ENCODE measurements at regions of chr1 and their contacts with region 1.

Region 1: GRCh38 chr1:21200767-21201166 is 24.1 kb upstream of the EIF4G3 start:
- DNase-seq: no peak
- H3K4me3 ChIP-seq: no peak overlapping the region
- H3K27ac ChIP-seq: no peak overlapping the region
- H3K4me1 ChIP-seq: no peaks in the 10 kb centered on the region
- H3K27me3 ChIP-seq: no peaks in the 10 kb centered on the region
- CTCF ChIP-seq: no peak
- EP300 ChIP-seq: no peak
- POLR2A ChIP-seq: no peak

Region 2: GRCh38 chr1:20376880-20377494 is 823.8 kb before region 1 on chr1:
- intact Hi-C with region 1: no loop called
- DNase-seq: peak in 4 of 5 donors; percentile 34 to 61 (median 44)
- H3K4me3 ChIP-seq: no peak overlapping the region
- H3K27ac ChIP-seq: no peak overlapping the region
- H3K4me1 ChIP-seq: no peaks in the 10 kb centered on the region
- H3K27me3 ChIP-seq: no peaks in the 10 kb centered on the region
- CTCF ChIP-seq: peak; percentile 26 to 52 (median 36)
- EP300 ChIP-seq: no peak
- POLR2A ChIP-seq: no peak

Region 3: DNA sequence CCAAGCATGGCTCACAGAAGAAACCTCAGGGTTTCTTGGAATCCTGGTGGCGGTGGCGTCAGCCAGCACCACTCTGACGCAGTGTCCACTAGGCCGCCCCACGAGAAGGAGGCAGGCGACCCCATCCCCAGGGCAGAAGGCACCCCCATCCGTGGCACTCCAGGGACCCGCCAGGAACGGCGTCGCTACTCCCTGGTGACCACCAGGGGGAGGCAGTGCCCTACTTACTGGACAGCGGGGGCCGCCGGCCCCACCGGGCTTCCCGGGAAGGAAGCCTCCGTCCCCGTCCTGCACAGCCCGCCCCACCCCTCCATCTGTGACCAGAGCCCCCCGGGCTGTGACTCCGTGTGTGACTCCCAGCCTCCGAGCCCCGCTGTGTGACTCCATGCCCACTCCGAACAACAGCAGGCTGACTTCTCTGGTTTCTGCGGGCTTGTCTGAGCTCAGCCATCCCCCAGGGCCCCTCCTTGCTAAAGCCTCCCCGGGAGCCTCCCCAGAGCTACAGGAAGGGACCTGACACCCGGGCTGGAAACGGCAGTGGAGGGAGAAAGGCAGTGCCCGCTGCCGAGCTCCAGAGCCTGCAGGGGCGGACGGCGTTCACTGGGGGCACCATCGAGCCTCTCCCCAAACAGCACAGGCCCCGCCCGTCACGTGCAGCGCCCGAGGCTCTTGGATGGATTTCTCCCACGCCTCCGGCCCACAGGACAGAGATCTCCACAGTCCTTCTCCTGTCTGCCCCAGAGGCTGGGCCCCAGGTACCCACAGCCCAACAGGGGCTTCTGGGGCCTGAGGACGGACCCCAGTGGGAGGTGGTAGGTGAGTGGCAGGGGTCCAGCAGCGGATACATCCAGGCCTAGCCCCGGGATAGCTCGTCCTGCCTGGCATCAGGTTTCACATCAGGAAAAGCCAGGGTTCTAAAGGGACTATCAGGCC is 504.1 kb before region 1 on chr1:
- intact Hi-C with region 1: loop called (anchors 2 to 5 kb)
- DNase-seq: peak; percentile 89 to 93 (median 91)
- H3K4me3 ChIP-seq: peak overlapping the region; percentile 51
- H3K27ac ChIP-seq: peak overlapping the region; percentile 57 to 84
- H3K4me1 ChIP-seq: no peaks in the 10 kb centered on the region
- H3K27me3 ChIP-seq: no peaks in the 10 kb centered on the region
- CTCF ChIP-seq: peak; percentile 54 to 92 (median 89)
- EP300 ChIP-seq: no peak
- POLR2A ChIP-seq: peak; percentile 15

Region 4: DNA sequence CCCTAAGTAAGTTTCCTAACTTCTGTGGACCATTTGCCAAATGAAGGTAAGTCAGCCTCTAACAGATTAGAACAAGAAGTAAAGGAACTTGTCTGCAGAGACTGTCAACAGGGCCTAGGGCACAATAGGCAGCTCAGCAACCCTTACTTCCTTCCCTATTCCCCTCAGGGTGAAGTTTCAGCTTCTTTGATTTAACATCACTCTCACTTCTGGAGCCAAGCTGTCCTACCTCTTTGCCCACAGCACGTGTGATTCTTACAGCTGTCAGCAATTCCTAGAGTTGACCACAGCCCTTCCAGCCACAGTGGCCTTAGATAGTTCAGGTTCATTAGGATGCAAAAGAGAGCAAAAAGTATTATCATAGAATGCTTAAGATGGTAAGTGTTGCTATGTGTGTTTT is 16.5 kb before region 1 on chr1:
- intact Hi-C with region 1: no loop called
- DNase-seq: no peak
- H3K4me3 ChIP-seq: no peak overlapping the region
- H3K27ac ChIP-seq: no peak overlapping the region
- H3K4me1 ChIP-seq: no peaks in the 10 kb centered on the region
- H3K27me3 ChIP-seq: no peaks in the 10 kb centered on the region
- CTCF ChIP-seq: no peak
- EP300 ChIP-seq: no peak
- POLR2A ChIP-seq: no peak